ENCODE measurements at regions of chr2 and their contacts with region 1.

Region 1: GRCh38 chr2:96344011-96344410 is 8.4 kb downstream of the NCAPH start:
- DNase-seq: peak in 2 of 3 donors; percentile 41 to 52
- H3K4me3 ChIP-seq: no peak overlapping the region
- H3K27ac ChIP-seq: no peak overlapping the region
- H3K4me1 ChIP-seq: no peaks in the 10 kb centered on the region
- H3K27me3 ChIP-seq: no peaks in the 10 kb centered on the region

Region 2: GRCh38 chr2:96174251-96175144 is 169.5 kb before region 1 on chr2:
- CTCF ChIA-PET with region 1: no interaction called
- POLR2A ChIA-PET with region 1: no interaction called
- DNase-seq: peak; percentile 64 to 83 (median 75)
- H3K4me3 ChIP-seq: no peak overlapping the region
- H3K27ac ChIP-seq: no peak overlapping the region
- H3K4me1 ChIP-seq: peaks cover 0 to 2% (median 0%) of the 10 kb centered on the region in 4 experiments
- H3K27me3 ChIP-seq: no peaks in the 10 kb centered on the region

Region 3: DNA sequence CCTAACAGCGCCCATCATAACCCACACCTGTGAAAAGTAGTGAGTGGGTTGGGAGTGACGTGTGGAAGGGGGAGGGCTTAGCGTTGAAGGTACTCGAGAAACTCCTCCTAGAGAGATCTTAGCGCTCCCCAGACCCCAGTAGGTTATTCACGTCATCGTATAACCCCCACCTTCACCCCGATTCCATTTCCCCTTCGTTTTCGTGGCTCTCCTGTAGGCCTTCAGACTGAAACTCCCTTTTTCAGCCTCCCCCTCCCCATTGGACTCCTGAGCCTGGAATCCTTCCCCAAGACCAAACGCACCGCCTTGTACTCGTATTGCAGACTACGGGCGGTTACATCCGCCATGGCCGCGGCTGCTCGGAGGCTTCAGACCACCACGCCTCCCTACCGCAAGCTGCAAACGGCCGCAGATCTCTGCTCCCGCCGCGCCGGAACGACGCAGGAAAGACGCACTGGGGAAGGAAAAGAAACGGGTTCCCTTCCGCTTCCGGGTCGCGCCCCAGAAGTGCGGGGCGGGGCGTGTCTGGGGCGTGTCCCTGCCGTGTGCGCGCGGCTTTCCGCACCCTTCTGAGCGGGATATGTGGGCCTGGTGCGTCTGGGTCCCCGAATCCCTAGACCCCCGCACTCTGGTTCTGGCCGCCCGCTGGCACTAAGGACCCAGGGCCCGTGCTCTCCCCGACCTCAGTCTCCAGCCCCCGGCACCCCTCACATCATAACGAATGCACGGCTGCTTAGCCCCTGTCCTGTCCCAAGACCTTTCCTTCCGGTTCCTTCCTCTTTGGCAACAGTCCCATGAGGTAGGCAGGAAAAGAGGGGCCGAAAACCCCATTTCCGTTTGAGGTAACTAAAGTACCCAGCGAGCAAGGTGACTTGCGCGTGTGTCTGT is 38.7 kb before region 1 on chr2 and contains the start of gene SNRNP200:
- CTCF ChIA-PET with region 1: interaction called, 10 read pairs
- POLR2A ChIA-PET with region 1: interaction called, 5 read pairs
- DNase-seq: peak; percentile 91 to 92 (median 91)
- H3K4me3 ChIP-seq: peak within 1 kb of the TSS; percentile 77 to 97 (median 94)
- H3K27ac ChIP-seq: peak within 1 kb of the TSS; percentile 74 to 94
- H3K4me1 ChIP-seq: peaks cover 11 to 25% (median 17%) of the 10 kb centered on the region in 4 experiments
- H3K27me3 ChIP-seq: no peaks in the 10 kb centered on the region